ENCODE measurements at regions of chr7 and their contacts with region 1.

Region 1: DNA sequence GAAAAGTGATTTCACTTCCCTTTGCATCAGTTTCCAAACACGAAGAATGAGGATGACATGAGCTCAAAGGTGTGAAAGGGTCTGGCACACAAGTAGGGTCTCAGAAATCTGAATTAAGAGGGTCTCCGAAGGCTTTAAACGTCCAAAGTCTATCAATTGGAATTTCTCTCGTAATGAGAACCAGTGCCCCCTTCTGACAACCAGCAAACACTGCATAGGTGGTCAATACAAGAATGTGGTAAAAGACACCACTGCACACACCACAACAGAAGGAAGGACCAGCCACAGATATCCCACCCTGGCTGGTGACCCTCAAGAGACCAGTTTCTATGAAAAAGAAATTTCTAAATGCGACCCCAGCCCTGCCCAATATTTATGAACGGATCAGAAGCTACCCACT is 78.1 kb downstream of the CALN1 start:
- DNase-seq: peak; percentile 61 to 76 (median 67)
- H3K4me3 ChIP-seq: peak overlapping the region in 4 of 7 experiments; percentile 34 to 89 (median 82)
- H3K27ac ChIP-seq: no peak overlapping the region
- H3K4me1 ChIP-seq: peaks cover 0 to 46% (median 40%) of the 10 kb centered on the region in 4 experiments
- H3K27me3 ChIP-seq: no peaks in the 10 kb centered on the region

Region 2: GRCh38 chr7:71752171-71752935 is 581.7 kb before region 1 on chr7:
- CTCF ChIA-PET with region 1: interaction called, 10 read pairs
- POLR2A ChIA-PET with region 1: no interaction called
- DNase-seq: peak; percentile 48 to 75 (median 71)
- H3K4me3 ChIP-seq: peak overlapping the region in 5 of 7 experiments; percentile 8 to 69 (median 36)
- H3K27ac ChIP-seq: no peak overlapping the region
- H3K4me1 ChIP-seq: peaks cover 0 to 13% (median 9%) of the 10 kb centered on the region in 4 experiments
- H3K27me3 ChIP-seq: no peaks in the 10 kb centered on the region

Region 3: GRCh38 chr7:72183684-72184234 is 150.3 kb before region 1 on chr7:
- CTCF ChIA-PET with region 1: interaction called, 11 read pairs
- POLR2A ChIA-PET with region 1: no interaction called
- DNase-seq: peak; percentile 52 to 68 (median 57)
- H3K4me3 ChIP-seq: no peak overlapping the region
- H3K27ac ChIP-seq: peak overlapping the region in 1 of 2 experiments; percentile 2
- H3K4me1 ChIP-seq: peaks cover 0 to 4% (median under 1%) of the 10 kb centered on the region in 4 experiments
- H3K27me3 ChIP-seq: no peaks in the 10 kb centered on the region

Region 4: DNA sequence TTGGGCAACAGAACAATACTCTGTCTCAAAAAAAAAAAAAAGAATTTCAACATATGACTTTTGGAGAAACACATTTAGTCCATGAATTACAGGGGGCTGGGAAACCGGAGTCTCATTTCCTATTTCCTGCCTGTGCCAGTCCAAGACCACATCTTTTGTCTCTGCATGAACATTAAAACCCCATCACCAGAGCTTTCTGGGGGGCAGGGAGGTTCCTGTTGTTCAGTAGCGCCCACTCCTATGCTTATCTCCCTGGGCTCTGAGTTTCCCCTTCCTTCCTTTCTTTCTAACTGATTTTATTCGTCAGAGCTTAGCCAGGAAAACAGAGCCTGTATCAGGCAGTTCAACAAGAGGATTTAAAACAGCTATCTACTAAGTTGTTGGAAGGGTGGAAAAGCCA is 41.3 kb before region 1 on chr7:
- CTCF ChIA-PET with region 1: interaction called, 15 read pairs
- POLR2A ChIA-PET with region 1: interaction called, 4 read pairs
- DNase-seq: peak; percentile 89 to 96 (median 90)
- H3K4me3 ChIP-seq: peak overlapping the region in 5 of 7 experiments; percentile 9 to 65 (median 34)
- H3K27ac ChIP-seq: peak overlapping the region; percentile 87
- H3K4me1 ChIP-seq: peaks cover 0 to 38% (median 17%) of the 10 kb centered on the region in 4 experiments
- H3K27me3 ChIP-seq: no peaks in the 10 kb centered on the region

Region 5: DNA sequence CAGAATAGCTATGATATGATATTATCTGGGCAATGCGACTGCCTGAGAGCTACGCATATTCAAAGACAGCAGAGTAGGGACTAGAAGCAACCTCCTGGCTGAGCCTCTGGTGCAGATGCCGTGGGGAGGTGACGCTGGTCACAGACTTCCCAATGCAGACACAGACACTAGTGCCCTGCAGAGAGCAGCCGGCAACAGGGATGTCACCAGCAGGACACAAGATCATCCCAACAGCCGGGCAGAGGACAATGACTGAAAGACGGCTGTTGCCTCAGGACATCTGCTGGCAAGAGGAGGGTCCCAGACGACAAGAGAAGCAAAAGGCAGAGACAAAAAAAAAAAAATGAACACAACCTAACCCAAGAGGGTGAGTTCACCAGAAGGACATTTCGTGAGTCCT is 26.5 kb before region 1 on chr7:
- CTCF ChIA-PET with region 1: interaction called, 13 read pairs
- POLR2A ChIA-PET with region 1: no interaction called
- DNase-seq: no peak
- H3K4me3 ChIP-seq: no peak overlapping the region
- H3K27ac ChIP-seq: no peak overlapping the region
- H3K4me1 ChIP-seq: peaks cover 0 to 20% (median 2%) of the 10 kb centered on the region in 4 experiments
- H3K27me3 ChIP-seq: no peaks in the 10 kb centered on the region

Region 6: GRCh38 chr7:72321081-72321480 is 13.0 kb before region 1 on chr7:
- CTCF ChIA-PET with region 1: interaction called, 13 read pairs
- POLR2A ChIA-PET with region 1: no interaction called
- DNase-seq: no peak
- H3K4me3 ChIP-seq: no peak overlapping the region
- H3K27ac ChIP-seq: no peak overlapping the region
- H3K4me1 ChIP-seq: peaks cover 0 to 22% (median 18%) of the 10 kb centered on the region in 4 experiments
- H3K27me3 ChIP-seq: no peaks in the 10 kb centered on the region

Region 7: GRCh38 chr7:72538856-72539255 is 204.8 kb after region 1 on chr7:
- CTCF ChIA-PET with region 1: no interaction called
- POLR2A ChIA-PET with region 1: no interaction called
- DNase-seq: no peak
- H3K4me3 ChIP-seq: no peak overlapping the region
- H3K27ac ChIP-seq: no peak overlapping the region
- H3K4me1 ChIP-seq: no peaks in the 10 kb centered on the region
- H3K27me3 ChIP-seq: no peaks in the 10 kb centered on the region